Common myeloid progenitor, CD34-positive (primary cell): ENCODE measurements at regions of chr1 and their contacts with region 1.

Region 1: GRCh38 chr1:59971464-59971911 is 44.9 kb upstream of the CYP2J2 start:
- DNase-seq: peak; percentile 39 to 51 (median 48)
- H3K4me3 ChIP-seq: peak overlapping the region in 2 of 7 experiments; percentile 14 to 66
- H3K27ac ChIP-seq: no peak overlapping the region
- H3K4me1 ChIP-seq: peaks cover 0 to 11% (median 5%) of the 10 kb centered on the region in 4 experiments
- H3K27me3 ChIP-seq: peaks cover 0 to 2% (median 0%) of the 10 kb centered on the region in 5 experiments

Region 2: DNA sequence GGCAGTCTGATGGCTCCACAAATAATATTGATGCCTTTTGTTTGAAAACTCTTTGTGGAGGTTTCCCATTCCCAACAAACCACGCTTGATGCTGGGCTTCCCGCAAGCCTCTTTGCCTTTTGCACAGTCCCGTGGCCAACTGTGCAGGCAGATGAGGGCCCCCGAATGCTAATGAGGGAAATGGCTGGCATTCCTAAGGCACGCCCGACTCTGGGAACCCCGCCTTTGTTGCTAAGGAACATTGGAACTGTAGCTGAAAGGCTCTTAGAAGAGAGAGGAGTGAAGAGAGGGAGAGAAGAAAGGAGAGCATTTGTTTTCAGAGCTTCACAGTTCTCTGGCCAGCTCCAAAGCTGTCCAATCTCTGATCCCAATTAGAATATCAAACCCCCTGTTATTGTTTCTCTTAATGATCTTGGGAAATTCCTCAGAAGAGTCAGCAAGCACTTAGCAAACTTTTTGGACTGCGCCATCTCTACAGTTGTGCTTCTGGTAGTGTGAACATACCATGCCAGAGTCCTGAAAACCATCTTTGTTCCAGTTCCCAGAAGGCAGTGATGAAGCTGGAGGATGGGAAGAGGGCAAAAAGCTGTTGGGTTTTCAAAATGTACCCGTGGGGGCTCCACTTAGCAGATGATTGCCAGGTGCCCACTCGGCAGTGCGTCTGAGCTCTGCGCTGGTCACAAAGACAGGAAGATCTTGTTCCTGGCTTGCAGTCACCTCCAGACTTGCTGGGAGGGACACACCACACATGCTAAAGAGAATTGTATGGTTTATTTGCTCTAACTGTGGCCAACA is 15.2 kb after region 1 on chr1:
- CTCF ChIA-PET with region 1: interaction called, 20 read pairs
- POLR2A ChIA-PET with region 1: interaction called, 3 read pairs
- DNase-seq: no peak
- H3K4me3 ChIP-seq: no peak overlapping the region
- H3K27ac ChIP-seq: no peak overlapping the region
- H3K4me1 ChIP-seq: no peaks in the 10 kb centered on the region
- H3K27me3 ChIP-seq: no peaks in the 10 kb centered on the region

Region 3: DNA sequence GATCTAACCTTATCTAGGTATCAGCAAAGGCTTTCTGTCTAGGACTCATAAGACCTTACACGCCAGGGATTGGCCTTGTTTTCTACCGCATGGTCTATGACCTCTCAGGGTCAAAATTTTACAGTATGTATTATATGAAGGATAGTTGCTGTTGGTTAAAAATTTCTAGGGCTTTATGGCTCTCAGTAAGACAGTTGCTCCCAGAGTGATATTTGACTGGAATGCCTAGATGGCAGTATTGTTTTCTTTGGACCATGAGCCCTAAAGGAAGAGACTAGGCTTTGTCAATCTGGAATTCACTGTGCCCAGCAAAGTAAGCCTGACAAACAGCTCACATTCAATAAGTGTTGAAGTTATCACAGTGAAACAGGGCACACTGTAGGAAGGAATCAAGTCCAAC is 64.4 kb after region 1 on chr1:
- CTCF ChIA-PET with region 1: no interaction called
- POLR2A ChIA-PET with region 1: no interaction called
- DNase-seq: no peak
- H3K4me3 ChIP-seq: no peak overlapping the region
- H3K27ac ChIP-seq: no peak overlapping the region
- H3K4me1 ChIP-seq: peaks cover 0 to 5% (median 1%) of the 10 kb centered on the region in 4 experiments
- H3K27me3 ChIP-seq: no peaks in the 10 kb centered on the region